ENCODE measurements at regions of chr1 and their contacts with region 1.

Region 1: DNA sequence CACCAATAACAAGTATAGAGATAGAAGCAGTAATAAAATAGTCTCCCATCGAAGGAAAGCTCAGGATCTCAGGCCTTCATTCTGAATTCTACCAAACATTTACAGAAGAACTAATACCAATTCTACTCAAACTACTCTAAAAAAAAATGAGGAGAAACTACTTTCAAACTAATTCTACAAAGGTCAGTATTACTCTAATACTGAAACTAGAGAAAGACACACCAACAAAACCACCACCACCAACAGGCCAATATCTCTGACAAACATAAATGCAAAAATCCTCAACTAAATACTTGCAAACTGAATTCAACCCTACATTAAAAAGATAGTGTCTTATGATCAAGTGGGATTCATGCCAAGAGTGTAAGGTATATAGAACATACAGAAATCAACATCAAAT is 1078.4 kb downstream of the KCNT2 start:
- DNase-seq: no peak

Region 2: GRCh38 chr1:195481293-195481692 is 48.6 kb before region 1 on chr1:
- intact Hi-C with region 1: loop called (anchors 2 kb)
- DNase-seq: no peak

Region 3: GRCh38 chr1:195516036-195516435 is 13.8 kb before region 1 on chr1:
- intact Hi-C with region 1: no loop called
- DNase-seq: no peak

Measured in cardiac septum (tissue), 1 donor.